PC-9 (cell line): ENCODE measurements at regions of chr15 and their contacts with region 1.

Region 1: GRCh38 chr15:44066316-44066740 is 128.7 kb downstream of the FRMD5 start:
- DNase-seq: peak; percentile 51 to 52
- H3K4me3 ChIP-seq: no peak overlapping the region
- H3K27ac ChIP-seq: no peak overlapping the region
- H3K4me1 ChIP-seq: no peaks in the 10 kb centered on the region
- H3K27me3 ChIP-seq: no peaks in the 10 kb centered on the region
- CTCF ChIP-seq: peak; percentile 90

Region 2: DNA sequence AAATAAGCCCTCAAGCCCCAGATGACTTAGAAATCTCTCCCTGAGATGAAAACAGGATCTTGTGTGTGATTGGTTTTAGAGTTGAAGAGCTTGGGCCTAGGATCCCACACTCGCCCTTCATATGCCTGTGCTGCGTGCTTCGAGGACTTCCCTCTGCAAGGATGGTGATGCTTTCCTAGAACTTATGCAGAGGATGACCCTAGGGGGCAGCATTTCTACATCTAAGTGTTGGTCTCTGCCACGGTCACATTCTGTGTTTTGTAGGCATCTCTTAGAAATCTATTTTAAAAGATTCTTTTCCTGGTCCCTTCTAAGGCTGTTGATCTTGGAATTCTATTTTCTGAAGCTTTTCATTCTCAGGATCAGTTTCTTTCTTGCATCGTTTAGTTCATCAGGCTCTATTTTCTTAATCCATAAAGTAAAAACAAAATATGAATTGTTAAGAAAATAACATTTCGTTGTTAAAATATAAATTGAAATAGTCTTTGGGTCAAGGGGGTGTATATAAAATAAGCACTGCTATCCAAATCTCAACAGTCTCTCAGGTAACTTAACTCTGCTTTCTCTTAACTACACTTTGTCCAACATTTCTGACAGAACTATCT is 193.8 kb before region 1 on chr15:
- CTCF ChIA-PET with region 1: no interaction called
- POLR2A ChIA-PET with region 1: no interaction called
- intact Hi-C with region 1: loop called (anchors 1 kb)
- DNase-seq: peak; percentile 31 to 40
- H3K4me3 ChIP-seq: no peak overlapping the region
- H3K27ac ChIP-seq: no peak overlapping the region
- H3K4me1 ChIP-seq: no peaks in the 10 kb centered on the region
- H3K27me3 ChIP-seq: no peaks in the 10 kb centered on the region
- CTCF ChIP-seq: peak; percentile 65

Region 3: DNA sequence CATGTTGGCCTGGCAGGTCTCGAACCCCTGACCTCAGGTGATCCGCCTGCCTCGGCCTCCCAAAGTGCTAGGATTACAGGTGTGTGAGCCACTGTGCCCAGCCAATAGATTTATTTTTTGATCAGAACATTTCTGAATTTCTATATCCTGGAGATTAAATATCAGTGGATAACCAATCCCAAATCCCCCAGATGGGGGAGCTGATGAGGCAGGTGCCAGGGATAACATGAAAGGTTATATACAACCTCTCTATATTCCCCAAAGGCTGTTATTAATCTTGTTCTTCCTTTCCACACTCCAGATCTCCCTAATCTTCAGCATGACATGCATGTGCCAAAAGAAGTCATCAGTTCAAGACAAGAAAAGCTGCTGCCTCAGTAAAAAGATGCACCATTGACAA is 127.3 kb before region 1 on chr15:
- CTCF ChIA-PET with region 1: no interaction called
- POLR2A ChIA-PET with region 1: no interaction called
- intact Hi-C with region 1: loop called (anchors 1 kb)
- DNase-seq: peak in 1 of 2 experiments; percentile 29
- H3K4me3 ChIP-seq: no peak overlapping the region
- H3K27ac ChIP-seq: no peak overlapping the region
- H3K4me1 ChIP-seq: no peaks in the 10 kb centered on the region
- H3K27me3 ChIP-seq: no peaks in the 10 kb centered on the region
- CTCF ChIP-seq: peak; percentile 62

Region 4: DNA sequence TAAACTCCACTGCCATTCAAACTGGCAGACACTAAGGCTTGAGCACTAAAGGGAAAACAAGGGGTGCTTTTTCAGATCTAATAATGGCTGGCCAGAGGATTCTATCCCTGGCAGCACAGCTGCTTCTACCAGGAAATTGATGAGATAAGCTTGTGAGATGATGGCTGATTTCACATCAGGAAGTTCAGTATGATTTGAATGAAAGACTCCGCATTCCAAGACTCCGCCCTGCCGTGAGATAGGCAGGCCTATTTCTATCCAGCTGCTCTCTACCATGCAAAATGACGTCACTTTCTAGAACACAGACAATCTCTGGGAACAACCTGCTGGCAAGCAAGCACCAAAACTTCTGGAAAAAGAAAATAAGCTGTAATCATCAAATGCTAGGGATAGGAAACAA is 67.7 kb before region 1 on chr15:
- CTCF ChIA-PET with region 1: no interaction called
- POLR2A ChIA-PET with region 1: no interaction called
- intact Hi-C with region 1: no loop called
- DNase-seq: peak in 1 of 2 experiments; percentile 27
- H3K4me3 ChIP-seq: no peak overlapping the region
- H3K27ac ChIP-seq: no peak overlapping the region
- H3K4me1 ChIP-seq: no peaks in the 10 kb centered on the region
- H3K27me3 ChIP-seq: no peaks in the 10 kb centered on the region
- CTCF ChIP-seq: no peak

Region 5: DNA sequence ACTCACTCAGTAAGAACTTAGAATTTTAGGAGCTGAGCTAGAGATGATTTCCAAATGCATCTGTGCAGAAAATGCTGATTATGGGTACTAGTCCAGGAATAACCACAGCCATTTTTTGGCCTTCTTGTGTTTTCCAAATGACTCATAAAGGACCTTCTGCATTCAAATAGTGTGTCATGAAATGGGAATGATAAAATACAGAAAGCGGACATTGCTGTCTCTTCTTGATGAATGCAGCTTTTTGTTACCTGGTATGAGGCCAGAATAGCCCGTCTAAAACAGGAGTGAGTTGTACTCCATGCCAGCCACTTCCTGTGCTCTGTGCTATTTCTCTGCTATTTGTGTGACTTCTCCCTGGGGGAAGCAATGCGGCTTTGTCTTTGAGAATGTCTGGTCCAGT is 149.3 kb after region 1 on chr15:
- CTCF ChIA-PET with region 1: no interaction called
- POLR2A ChIA-PET with region 1: no interaction called
- intact Hi-C with region 1: loop called (anchors 1 kb)
- DNase-seq: peak; percentile 26 to 71
- H3K4me3 ChIP-seq: no peak overlapping the region
- H3K27ac ChIP-seq: no peak overlapping the region
- H3K4me1 ChIP-seq: 0 out of 2 replicates have a peak, but pooled peaks cover 4% of the 10 kb centered on the region
- H3K27me3 ChIP-seq: no peaks in the 10 kb centered on the region
- CTCF ChIP-seq: no peak